ENCODE measurements at regions of chr17 and their contacts with region 1.

Region 1: GRCh38 chr17:40191237-40192208 is 14.3 kb downstream of the RAPGEFL1 start:
- DNase-seq: peak; percentile 79
- H3K4me3 Mint-ChIP-seq: peak overlapping the region; percentile 84
- H3K27ac Mint-ChIP-seq: peak overlapping the region; percentile 33
- H3K4me1 Mint-ChIP-seq: peaks cover 29% of the 10 kb centered on the region
- H3K27me3 Mint-ChIP-seq: peaks cover 26% of the 10 kb centered on the region

Region 2: GRCh38 chr17:40019140-40019991 is 172.2 kb before region 1 on chr17:
- CTCF ChIA-PET with region 1: interaction called, 24 read pairs
- DNase-seq: no peak
- H3K4me3 Mint-ChIP-seq: no peak overlapping the region
- H3K27ac Mint-ChIP-seq: peak overlapping the region; percentile 58
- H3K4me1 Mint-ChIP-seq: peaks cover 2% of the 10 kb centered on the region
- H3K27me3 Mint-ChIP-seq: peaks cover 11% of the 10 kb centered on the region

Region 3: GRCh38 chr17:40203131-40203530 is 11.6 kb after region 1 on chr17:
- CTCF ChIA-PET with region 1: interaction called, 16 read pairs
- DNase-seq: no peak
- H3K4me3 Mint-ChIP-seq: no peak overlapping the region
- H3K27ac Mint-ChIP-seq: no peak overlapping the region
- H3K4me1 Mint-ChIP-seq: peaks cover 6% of the 10 kb centered on the region
- H3K27me3 Mint-ChIP-seq: peaks cover 48% of the 10 kb centered on the region

Region 4: GRCh38 chr17:40278414-40278813 is 86.9 kb after region 1 on chr17:
- CTCF ChIA-PET with region 1: no interaction called
- DNase-seq: no peak
- H3K4me3 Mint-ChIP-seq: no peak overlapping the region
- H3K27ac Mint-ChIP-seq: no peak overlapping the region
- H3K4me1 Mint-ChIP-seq: peaks cover 19% of the 10 kb centered on the region
- H3K27me3 Mint-ChIP-seq: no peaks in the 10 kb centered on the region

Measured in activated naive CD4-positive, alpha-beta T cell treated with anti-CD3 and anti-CD28 coated beads, Interleukin-2, amount 10 ng/mL, durations not matched to agents 7 days and 5 days (primary cell).